Stomach (tissue), 19 donors: ENCODE measurements at regions of chr1 and their contacts with region 1.

Region 1: DNA sequence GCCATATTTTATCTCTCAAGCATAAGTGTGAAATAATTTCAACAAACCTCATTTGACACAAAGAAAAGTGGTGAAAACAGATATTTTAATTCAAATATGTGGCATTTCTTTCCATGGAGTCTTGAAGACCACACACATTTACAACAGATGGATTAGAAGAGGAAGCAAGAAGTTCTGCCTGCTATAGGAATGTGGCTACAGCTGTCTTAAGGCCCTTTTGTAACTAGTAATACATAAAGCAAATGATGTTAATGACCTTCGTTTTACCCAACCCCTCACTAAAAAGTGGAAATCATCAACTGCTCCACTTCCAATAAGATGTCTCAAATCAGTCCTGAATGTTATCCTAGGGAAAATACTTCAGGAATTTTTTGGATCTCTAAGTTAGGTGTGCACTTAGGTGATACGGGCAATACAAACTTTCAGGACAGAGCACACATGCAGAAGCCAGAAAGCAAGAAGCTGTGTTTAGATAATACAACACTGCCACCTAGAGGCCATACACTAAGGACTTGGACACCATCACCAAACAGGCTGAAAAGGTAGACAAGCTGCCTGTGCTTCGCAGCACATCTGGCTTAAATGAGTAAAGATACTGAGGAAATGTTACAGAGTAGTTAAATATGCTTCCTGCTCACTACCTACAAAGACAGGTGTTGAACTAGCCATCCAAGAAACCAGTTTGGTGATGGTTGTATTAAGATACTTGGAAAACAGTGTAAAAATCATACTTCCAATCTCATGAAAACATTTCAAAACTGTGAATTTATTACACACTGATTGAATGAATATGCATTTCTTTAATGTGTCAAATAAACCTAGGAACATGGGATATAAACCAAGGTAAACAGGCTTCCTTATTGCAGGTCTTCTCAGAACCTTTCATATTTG is 24.4 kb downstream of the RRAGC start:
- DNase-seq: peak in 1 of 2 donors; percentile 94
- H3K4me3 ChIP-seq: no peak overlapping the region
- H3K27ac ChIP-seq: no peak overlapping the region
- H3K4me1 ChIP-seq: no peaks in the 10 kb centered on the region
- H3K27me3 ChIP-seq: no peaks in the 10 kb centered on the region
- CTCF ChIP-seq: peak in 5 of 7 experiments; percentile 59 to 84 (median 74)
- EP300 ChIP-seq: no peak
- POLR2A ChIP-seq: no peak

Region 2: DNA sequence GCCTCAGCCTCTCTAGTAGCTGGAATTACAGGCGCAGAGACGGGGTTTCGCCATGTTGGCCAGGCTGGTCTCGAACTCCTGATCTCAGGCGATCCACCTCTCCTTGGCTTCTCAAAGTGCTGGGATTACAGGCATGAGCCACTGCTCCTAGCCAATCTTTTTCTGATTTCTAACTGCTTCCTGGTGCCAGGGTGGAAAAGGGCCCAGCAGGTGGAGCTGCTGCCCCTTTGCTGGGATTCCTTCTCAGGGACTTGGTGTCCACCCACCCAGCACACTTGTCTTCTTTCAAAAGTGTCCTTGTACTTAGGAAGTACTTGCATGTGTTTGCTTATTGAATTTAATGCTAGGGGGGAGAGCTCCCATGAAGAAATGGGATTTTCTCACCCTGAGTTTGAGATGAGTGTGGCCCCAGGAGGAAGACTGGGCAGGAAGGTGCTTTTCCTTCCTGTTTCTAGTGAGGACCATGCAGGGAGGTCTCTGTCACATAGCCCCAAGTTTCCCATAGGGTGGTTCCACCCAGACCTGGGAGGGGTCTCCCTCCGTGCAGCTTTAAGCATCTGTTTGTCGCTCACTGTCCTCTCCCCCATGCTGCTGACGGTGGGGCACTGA is 808.5 kb before region 1 on chr1:
- intact Hi-C with region 1: loop called (anchors 10 kb)
- DNase-seq: peak; percentile 55 to 85
- H3K4me3 ChIP-seq: no peak overlapping the region
- H3K27ac ChIP-seq: no peak overlapping the region
- H3K4me1 ChIP-seq: peaks cover 21 to 32% (median 28%) of the 10 kb centered on the region in 4 donors
- H3K27me3 ChIP-seq: no peaks in the 10 kb centered on the region
- CTCF ChIP-seq: peak in 4 of 7 experiments; percentile 18 to 51 (median 49)
- EP300 ChIP-seq: no peak
- POLR2A ChIP-seq: no peak

Region 3: DNA sequence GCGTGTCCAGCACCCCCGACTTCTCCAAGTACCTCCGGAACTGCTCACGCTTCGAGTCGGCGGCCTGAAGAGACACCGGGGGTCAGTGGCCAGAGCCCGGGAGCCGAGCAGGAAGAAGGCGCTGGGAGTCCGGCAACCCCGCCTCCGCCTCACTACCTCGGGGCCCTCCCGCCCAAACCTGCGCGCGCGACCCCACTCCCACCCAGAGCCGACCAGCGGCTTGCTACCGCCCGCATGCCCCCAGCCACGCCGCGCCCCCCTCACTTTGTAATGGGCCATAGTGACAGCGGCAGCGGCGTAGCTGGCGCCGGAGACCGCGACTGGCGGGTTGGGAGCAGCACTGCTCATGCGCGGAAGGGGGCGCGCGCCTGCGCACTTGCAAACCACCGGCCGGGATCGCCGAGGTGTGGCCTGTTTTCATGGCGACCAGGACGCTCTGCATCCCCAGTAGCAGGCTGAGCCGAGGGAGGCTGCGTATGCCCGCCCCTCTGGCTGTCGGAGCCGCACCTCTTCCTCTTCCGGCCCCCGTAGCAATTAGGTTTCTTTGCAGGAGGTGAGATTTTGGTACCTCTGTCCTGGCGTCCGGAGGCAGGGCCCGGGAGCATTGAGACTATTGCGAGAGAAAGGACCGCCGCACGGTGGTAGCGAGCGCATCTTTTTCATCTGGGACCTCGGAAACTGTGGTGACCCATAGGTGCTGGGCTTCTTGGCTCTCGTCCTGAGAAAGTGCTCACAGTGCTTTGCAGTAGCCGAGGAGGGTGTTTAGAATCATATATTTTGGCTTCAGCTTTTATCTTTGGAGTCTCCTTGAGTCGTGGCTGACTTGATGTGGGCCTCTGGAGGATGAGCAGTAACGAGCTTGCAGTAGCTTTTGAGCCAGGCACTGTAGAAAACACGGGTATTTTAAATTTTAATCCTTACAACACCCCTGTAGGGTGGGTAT is 38.1 kb after region 1 on chr1 and contains the start of gene MYCBP:
- intact Hi-C with region 1: no loop called
- DNase-seq: peak; percentile 96 to 99
- H3K4me3 ChIP-seq: peak within 1 kb of the TSS; percentile 81 to 93 (median 88)
- H3K27ac ChIP-seq: peak within 1 kb of the TSS; percentile 73 to 81 (median 76)
- H3K4me1 ChIP-seq: peaks cover 14 to 25% (median 22%) of the 10 kb centered on the region in 4 donors
- H3K27me3 ChIP-seq: no peaks in the 10 kb centered on the region
- CTCF ChIP-seq: peak in 3 of 7 experiments; percentile 17 to 27 (median 21)
- EP300 ChIP-seq: no peak
- POLR2A ChIP-seq: no peak
- total RNA-seq, gene MYCBP: 2.2 to 111 (median 12.3) TPM